ENCODE measurements at regions of chr3 and their contacts with region 1.

Region 1: DNA sequence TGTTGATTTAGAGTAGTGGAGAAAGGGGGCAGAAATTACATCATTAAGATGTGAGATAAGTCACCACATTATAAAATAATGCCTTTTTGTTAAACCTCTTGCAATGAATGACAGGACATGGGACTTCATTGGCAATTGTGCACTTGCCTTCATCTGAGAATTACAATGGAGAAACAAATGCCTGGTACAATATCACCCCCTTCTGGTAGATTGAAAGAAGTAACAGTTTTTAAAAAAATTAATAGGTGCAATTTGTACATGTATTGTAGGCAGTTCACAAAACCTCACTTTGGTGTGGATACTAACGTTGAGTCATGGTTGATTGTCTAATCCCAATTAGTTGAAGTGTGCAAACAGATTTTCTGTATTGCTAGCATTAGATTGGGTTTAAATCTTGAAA is 4.6 kb upstream of the P2RY14 start:
- DNase-seq: peak; percentile 58
- H3K4me3 ChIP-seq: no peak overlapping the region
- H3K27ac ChIP-seq: no peak overlapping the region
- H3K4me1 ChIP-seq: no peaks in the 10 kb centered on the region
- H3K27me3 ChIP-seq: peaks cover 0 to 6% of the 10 kb centered on the region in 2 experiments
- CTCF ChIP-seq: peak; percentile 30 to 42
- POLR2A ChIP-seq: no peak

Region 2: DNA sequence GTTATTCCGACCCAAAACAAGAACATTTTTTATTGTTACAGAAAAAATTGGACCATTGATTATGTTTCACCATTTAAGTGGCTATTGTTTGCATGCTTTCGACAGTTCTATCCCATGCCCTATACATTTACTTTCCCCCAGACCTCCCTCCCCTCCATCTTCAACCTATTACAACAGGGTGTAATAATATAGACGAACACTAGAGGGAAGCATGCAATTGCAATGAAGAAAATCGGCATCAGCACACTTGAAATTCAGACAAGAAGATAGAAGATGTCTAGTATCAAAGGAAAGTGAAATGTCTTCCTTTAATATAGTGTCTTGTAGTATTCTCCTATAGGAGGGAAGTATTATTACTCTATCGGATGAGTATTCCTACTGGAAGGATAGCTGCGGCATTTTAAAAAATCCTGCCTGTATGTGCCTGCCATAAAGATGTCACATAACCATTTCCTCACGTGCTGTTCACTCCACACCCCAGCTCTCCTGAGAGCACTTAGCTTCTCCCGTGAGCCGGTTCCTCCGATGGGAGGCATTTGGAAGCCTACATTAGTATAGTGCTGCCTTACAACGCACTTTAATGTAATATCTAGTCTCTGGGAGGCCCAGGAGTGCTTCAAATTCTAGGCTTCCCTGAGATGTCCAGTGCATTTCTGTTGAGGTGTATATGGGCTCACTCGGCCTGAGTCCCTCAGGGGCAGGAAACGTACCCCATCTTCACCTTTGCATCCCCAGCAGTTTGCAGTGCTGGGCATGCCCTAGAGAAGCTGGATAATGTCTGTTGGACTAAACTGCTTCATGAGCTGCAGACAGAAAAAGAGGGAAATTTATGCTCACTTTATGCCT is 561.4 kb before region 1 on chr3:
- CTCF ChIA-PET with region 1: no interaction called
- POLR2A ChIA-PET with region 1: no interaction called
- dilution Hi-C with region 1: no loop called
- intact Hi-C with region 1: no loop called
- DNase-seq: peak; percentile 69
- H3K4me3 ChIP-seq: no peak overlapping the region
- H3K27ac ChIP-seq: no peak overlapping the region
- H3K4me1 ChIP-seq: no peaks in the 10 kb centered on the region
- H3K27me3 ChIP-seq: peaks cover 0 to 2% of the 10 kb centered on the region in 2 experiments
- CTCF ChIP-seq: peak; percentile 51 to 61
- POLR2A ChIP-seq: no peak

Region 3: GRCh38 chr3:150787741-150788370 is 495.1 kb before region 1 on chr3:
- CTCF ChIA-PET with region 1: no interaction called
- POLR2A ChIA-PET with region 1: no interaction called
- dilution Hi-C with region 1: no loop called
- intact Hi-C with region 1: loop called (anchors 5 kb)
- DNase-seq: peak; percentile 60
- H3K4me3 ChIP-seq: no peak overlapping the region
- H3K27ac ChIP-seq: no peak overlapping the region
- H3K4me1 ChIP-seq: peaks cover 5% of the 10 kb centered on the region
- H3K27me3 ChIP-seq: peaks cover 16 to 24% of the 10 kb centered on the region in 2 experiments
- CTCF ChIP-seq: peak; percentile 86 to 93
- POLR2A ChIP-seq: no peak

Region 4: DNA sequence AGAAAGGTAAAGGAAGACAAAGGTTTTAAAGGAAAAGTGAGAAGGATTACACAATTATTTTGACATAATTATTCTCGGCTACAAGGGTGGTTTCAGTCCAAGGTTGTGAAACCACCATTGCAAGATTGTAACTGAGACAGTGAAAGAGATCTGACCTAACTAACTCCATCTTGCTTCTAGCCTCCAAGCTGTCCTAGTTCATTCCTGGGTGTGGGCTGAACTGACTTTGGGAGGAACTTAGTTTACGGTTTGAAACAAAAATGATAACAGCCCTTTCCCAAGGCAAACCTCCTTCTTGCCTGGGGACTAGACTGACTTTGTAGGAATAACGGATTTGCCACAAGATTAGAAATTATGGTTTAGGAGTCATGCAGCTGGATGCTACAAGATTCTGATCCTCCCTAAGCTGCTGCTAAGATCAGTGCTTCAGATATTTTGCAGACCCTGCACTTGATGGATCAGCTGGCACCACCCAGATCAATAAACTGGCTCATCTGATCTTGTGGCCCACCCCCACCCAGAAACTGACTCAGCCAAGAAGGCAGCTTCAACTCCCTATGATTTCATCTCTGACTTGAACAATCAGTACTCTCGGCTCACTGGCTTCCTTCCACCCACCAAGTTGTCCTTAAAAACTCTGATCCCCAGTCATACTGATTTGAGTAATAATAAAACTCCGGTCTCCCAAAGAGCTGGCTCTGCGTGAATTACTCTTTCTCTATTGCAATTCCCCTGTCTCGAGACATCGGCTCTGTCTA is 393.1 kb after region 1 on chr3:
- CTCF ChIA-PET with region 1: no interaction called
- POLR2A ChIA-PET with region 1: no interaction called
- dilution Hi-C with region 1: no loop called
- intact Hi-C with region 1: no loop called
- DNase-seq: no peak
- H3K4me3 ChIP-seq: no peak overlapping the region
- H3K27ac ChIP-seq: no peak overlapping the region
- H3K4me1 ChIP-seq: no peaks in the 10 kb centered on the region
- H3K27me3 ChIP-seq: no peaks in the 10 kb centered on the region
- CTCF ChIP-seq: no peak
- POLR2A ChIP-seq: no peak

Region 5: GRCh38 chr3:152026033-152026556 is 743.2 kb after region 1 on chr3:
- CTCF ChIA-PET with region 1: no interaction called
- POLR2A ChIA-PET with region 1: no interaction called
- dilution Hi-C with region 1: no loop called
- intact Hi-C with region 1: no loop called
- DNase-seq: peak; percentile 95
- H3K4me3 ChIP-seq: peak overlapping the region in 1 of 3 experiments; percentile 41
- H3K27ac ChIP-seq: peak overlapping the region; percentile 89
- H3K4me1 ChIP-seq: peaks cover 41% of the 10 kb centered on the region
- H3K27me3 ChIP-seq: no peaks in the 10 kb centered on the region
- CTCF ChIP-seq: peak; percentile 16 to 19
- POLR2A ChIP-seq: peak; percentile 45